Heart right ventricle (tissue), 16 donors: ENCODE measurements at regions of chr15 and their contacts with region 1.

Region 1: GRCh38 chr15:85625856-85626255 is 168.9 kb downstream of the KLHL25 start:
- DNase-seq: no peak
- ATAC-seq: peak in 4 of 8 donors; percentile 28 to 39 (median 31)
- H3K4me3 ChIP-seq: no peak overlapping the region
- H3K27ac ChIP-seq: peak overlapping the region in 9 of 10 donors; percentile 8 to 93 (median 84)
- H3K4me1 ChIP-seq: peaks cover 21 to 98% (median 90%) of the 10 kb centered on the region in 9 donors
- H3K27me3 ChIP-seq: no peaks in the 10 kb centered on the region
- CTCF ChIP-seq: no peak

Region 2: GRCh38 chr15:85563328-85563727 is 62.5 kb before region 1 on chr15:
- intact Hi-C with region 1: no loop called
- DNase-seq: no peak
- ATAC-seq: peak in 7 of 8 donors; percentile 17 to 77 (median 35)
- H3K4me3 ChIP-seq: no peak overlapping the region
- H3K27ac ChIP-seq: peak overlapping the region in 4 of 10 donors; percentile 19 to 50 (median 40)
- H3K4me1 ChIP-seq: peaks cover 0 to 59% (median 40%) of the 10 kb centered on the region in 9 donors
- H3K27me3 ChIP-seq: no peaks in the 10 kb centered on the region
- CTCF ChIP-seq: no peak

Region 3: GRCh38 chr15:85689729-85690128 is 63.9 kb after region 1 on chr15:
- intact Hi-C with region 1: loop called in 1 of 10 experiments (anchors 10 kb)
- DNase-seq: peak in 1 of 2 donors; percentile 60
- ATAC-seq: peak; percentile 39 to 82 (median 56)
- H3K4me3 ChIP-seq: peak overlapping the region in 7 of 10 donors; percentile 17 to 59 (median 39)
- H3K27ac ChIP-seq: peak overlapping the region in 9 of 10 donors; percentile 8 to 93 (median 59)
- H3K4me1 ChIP-seq: peaks cover 15 to 89% (median 69%) of the 10 kb centered on the region in 9 donors
- H3K27me3 ChIP-seq: no peaks in the 10 kb centered on the region
- CTCF ChIP-seq: no peak

Region 4: DNA sequence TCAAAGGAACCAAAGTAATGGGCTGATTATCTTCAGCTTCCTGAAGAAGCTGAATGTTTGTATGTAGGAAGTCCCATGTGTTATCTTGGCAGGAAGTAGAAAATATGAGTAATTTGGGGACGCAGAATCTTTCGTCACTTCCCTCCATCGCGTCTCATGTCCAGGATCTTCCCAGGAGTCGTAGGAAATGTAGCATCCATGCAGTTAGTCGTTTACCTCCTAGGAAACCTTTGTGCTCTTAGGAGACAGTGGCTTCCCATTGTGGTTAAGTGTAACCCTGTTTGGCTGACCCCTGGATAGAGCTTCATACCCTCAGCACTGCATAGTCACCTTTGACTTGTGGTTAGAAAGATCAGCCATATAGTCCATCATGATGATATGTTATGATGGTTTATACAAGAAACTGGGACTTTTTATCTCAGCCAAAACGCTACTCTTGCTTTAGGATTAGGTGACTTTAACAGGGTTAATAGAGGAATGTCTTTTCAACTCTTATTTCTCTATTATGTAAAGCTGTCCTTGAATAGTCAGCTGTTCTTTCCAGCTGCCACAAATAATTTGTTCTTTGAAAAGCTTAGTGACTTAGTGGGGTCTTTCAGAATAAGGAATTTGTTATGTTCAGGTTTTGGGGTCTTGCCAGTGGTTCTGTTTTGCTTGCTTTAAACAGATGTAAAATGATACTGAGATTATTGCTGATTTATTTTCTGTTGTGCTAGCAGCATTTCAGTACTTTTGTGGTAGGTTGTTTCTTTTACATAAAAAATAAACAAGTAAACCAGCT is 76.7 kb after region 1 on chr15:
- intact Hi-C with region 1: loop called in 1 of 10 experiments (anchors 5 kb)
- DNase-seq: no peak
- ATAC-seq: peak in 3 of 8 donors; percentile 7 to 17 (median 14)
- H3K4me3 ChIP-seq: peak overlapping the region in 1 of 10 donors; percentile 22
- H3K27ac ChIP-seq: peak overlapping the region in 8 of 10 donors; percentile 81 to 91 (median 86)
- H3K4me1 ChIP-seq: peaks cover 29 to 76% (median 59%) of the 10 kb centered on the region in 9 donors
- H3K27me3 ChIP-seq: no peaks in the 10 kb centered on the region
- CTCF ChIP-seq: no peak

Region 5: GRCh38 chr15:85910834-85911233 is 285.0 kb after region 1 on chr15:
- intact Hi-C with region 1: no loop called
- DNase-seq: no peak
- ATAC-seq: no peak
- H3K4me3 ChIP-seq: no peak overlapping the region
- H3K27ac ChIP-seq: no peak overlapping the region
- H3K4me1 ChIP-seq: no peaks in the 10 kb centered on the region
- H3K27me3 ChIP-seq: peaks cover 0 to 12% (median 2%) of the 10 kb centered on the region in 7 donors
- CTCF ChIP-seq: no peak